BJ (cell line): ENCODE measurements at regions of chr5 and their contacts with region 1.

Region 1: DNA sequence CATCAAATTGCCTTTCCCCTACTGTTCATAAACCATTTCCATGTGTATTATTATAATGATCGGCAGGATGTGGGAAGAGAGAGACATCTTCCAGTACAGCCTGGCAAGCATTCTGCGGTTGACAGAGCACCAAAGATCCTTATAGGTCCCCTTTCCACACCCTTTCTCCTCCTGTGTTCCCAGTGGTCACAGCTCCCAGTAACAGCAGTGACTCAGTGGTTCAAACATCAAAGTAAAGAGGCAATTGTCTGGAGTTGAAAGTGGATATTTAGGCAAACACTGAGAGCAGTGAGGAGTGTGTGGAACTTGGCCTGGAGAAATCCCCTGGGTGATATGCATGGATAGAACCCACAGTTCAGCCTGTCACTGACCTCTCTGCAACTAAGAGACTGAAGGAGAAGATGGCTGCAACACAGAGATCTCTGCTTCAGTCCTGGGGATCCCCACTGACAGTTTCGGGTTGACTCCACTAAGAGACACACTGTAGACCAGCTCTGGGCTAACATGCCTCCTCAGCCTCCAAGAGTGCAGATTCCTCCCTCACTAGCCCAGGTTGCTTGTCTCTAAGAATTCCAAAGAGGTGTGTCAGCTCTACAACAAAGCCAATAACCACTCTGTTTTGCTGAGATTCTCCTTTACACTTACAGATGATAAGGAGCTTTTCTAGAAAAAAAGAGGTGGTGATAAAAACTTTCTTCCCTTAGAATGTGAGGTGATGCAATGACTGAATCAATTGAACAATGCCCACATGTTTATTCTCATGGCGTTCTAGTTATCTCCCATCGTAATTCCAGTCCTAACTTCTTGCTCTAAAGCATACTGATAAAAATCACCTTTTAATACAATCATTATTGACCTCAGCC is 94.4 kb upstream of the IL6ST start:
- DNase-seq: no peak
- H3K4me3 ChIP-seq: no peak overlapping the region
- H3K27me3 ChIP-seq: no peaks in the 10 kb centered on the region
- CTCF ChIP-seq: no peak

Region 2: DNA sequence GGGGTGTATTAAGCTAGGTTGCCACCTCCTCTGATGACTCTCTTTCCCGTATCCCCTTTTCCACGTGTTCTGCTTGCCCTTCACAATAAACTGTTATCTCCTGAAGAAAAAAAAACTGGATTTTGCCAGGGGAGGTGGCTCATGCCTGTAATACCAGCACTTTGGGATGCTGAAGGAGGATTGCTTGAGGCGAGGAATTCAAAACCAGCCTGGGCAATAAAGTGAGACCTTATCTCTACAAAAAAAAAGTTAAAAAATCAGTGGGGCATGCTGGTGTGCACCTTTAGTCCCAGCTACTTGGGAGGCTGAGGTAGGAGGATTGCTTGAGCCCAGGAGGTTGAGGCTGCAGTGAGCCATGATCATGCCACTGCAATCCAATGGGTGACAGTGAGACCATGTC is 12.7 kb before region 1 on chr5:
- CTCF ChIA-PET with region 1: interaction called, 3 read pairs
- POLR2A ChIA-PET with region 1: interaction called, 12 read pairs
- DNase-seq: no peak
- H3K4me3 ChIP-seq: no peak overlapping the region
- H3K27me3 ChIP-seq: no peaks in the 10 kb centered on the region
- CTCF ChIP-seq: no peak

Region 3: GRCh38 chr5:56112526-56113121 is 23.4 kb after region 1 on chr5:
- CTCF ChIA-PET with region 1: no interaction called
- POLR2A ChIA-PET with region 1: no interaction called
- DNase-seq: peak; percentile 96
- H3K4me3 ChIP-seq: no peak overlapping the region
- H3K27me3 ChIP-seq: no peaks in the 10 kb centered on the region
- CTCF ChIP-seq: no peak